CD8-positive, alpha-beta T cell (primary cell): ENCODE measurements at regions of chr10 and their contacts with region 1.

Region 1: DNA sequence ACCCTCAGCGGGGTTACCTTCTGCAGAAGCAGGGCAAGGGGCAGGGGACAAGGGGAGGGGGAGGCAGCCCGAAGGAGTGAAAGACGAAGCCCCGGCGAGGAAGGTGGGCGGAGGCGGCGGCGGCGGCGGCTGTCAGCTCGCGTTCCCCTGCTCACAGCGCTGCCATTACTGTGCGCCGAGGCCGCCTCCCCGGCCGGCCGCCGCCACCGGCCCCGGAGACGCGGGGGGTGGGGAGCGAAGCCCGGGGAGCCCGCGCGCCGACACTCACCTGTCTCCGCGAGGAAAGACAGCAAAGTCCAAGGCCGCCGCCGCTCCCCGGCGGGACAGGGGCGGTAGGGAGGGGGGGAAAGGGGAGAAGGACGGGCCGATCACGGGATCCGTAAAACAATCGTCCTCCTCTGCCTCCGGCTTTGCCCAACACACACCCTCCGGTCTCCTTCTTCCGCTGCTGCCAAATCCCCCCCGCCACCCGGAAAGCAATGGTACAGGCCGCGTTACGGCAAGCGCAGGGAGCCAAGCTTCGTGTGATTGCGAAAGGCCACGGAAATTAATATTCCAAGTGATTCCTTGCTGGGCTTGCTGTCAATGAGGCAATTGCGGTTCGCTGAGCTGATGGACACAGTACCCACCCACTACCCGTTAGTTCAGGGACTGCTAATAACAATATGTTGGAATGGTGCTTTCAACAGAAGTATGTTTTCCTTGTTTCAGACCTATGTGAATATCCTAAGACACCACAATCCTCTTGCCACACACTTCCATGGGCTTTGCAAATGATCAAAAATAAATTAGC is at the start of gene CUL2:
- DNase-seq: peak; percentile 85 to 96 (median 92)
- ATAC-seq: peak; percentile 92
- H3K4me3 ChIP-seq: peak within 1 kb of the TSS; percentile 86 to 97
- H3K4me3 Mint-ChIP-seq: peak within 1 kb of the TSS; percentile 97
- H3K27ac ChIP-seq: peak within 1 kb of the TSS; percentile 94 to 99
- H3K27ac Mint-ChIP-seq: peak within 1 kb of the TSS; percentile 98
- H3K4me1 ChIP-seq: peaks cover 38% of the 10 kb centered on the region
- H3K4me1 Mint-ChIP-seq: peaks cover 50% of the 10 kb centered on the region
- H3K27me3 ChIP-seq: peaks cover 0 to 2% of the 10 kb centered on the region in 2 experiments
- H3K27me3 Mint-ChIP-seq: no peaks in the 10 kb centered on the region
- CTCF ChIP-seq: no peak
- total RNA-seq, gene CUL2: 43.8 to 47.1 TPM

Region 2: GRCh38 chr10:34994565-34995142 is 95.7 kb before region 1 on chr10:
- CTCF ChIA-PET with region 1: no interaction called
- POLR2A ChIA-PET with region 1: no interaction called
- intact Hi-C with region 1: loop called in 1 of 2 experiments (anchors 5 kb)
- DNase-seq: peak in 6 of 9 experiments; percentile 11 to 57 (median 32)
- ATAC-seq: peak; percentile 62
- H3K4me3 ChIP-seq: no peak overlapping the region
- H3K4me3 Mint-ChIP-seq: no peak overlapping the region
- H3K27ac ChIP-seq: no peak overlapping the region
- H3K27ac Mint-ChIP-seq: no peak overlapping the region
- H3K4me1 ChIP-seq: peaks cover 6% of the 10 kb centered on the region
- H3K4me1 Mint-ChIP-seq: peaks cover 7% of the 10 kb centered on the region
- H3K27me3 ChIP-seq: no peaks in the 10 kb centered on the region
- H3K27me3 Mint-ChIP-seq: no peaks in the 10 kb centered on the region
- CTCF ChIP-seq: peak; percentile 36

Region 3: DNA sequence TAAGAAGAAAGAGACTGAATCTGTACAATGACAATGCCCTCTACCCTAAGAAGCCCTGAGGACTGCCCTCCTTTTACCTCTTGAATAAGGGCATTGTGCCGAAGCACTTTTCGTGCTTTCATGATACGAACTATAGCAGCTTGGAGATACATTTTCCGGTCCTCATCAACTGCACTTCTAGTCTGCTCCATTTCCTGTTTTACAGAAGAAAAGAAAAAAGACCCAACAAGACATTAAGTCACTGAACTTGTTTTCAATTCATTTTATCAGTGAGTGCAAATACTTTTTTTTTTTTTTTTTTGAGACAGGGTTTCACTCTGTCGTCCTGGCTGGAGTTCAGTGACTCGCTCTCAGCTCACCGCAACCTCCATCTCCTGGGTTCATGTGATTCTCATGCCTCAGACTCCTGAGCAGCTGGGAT is 78.6 kb before region 1 on chr10:
- CTCF ChIA-PET with region 1: no interaction called
- POLR2A ChIA-PET with region 1: no interaction called
- intact Hi-C with region 1: no loop called
- DNase-seq: no peak
- ATAC-seq: no peak
- H3K4me3 ChIP-seq: no peak overlapping the region
- H3K4me3 Mint-ChIP-seq: no peak overlapping the region
- H3K27ac ChIP-seq: no peak overlapping the region
- H3K27ac Mint-ChIP-seq: no peak overlapping the region
- H3K4me1 ChIP-seq: no peaks in the 10 kb centered on the region
- H3K4me1 Mint-ChIP-seq: no peaks in the 10 kb centered on the region
- H3K27me3 ChIP-seq: no peaks in the 10 kb centered on the region
- H3K27me3 Mint-ChIP-seq: no peaks in the 10 kb centered on the region
- CTCF ChIP-seq: no peak

Region 4: DNA sequence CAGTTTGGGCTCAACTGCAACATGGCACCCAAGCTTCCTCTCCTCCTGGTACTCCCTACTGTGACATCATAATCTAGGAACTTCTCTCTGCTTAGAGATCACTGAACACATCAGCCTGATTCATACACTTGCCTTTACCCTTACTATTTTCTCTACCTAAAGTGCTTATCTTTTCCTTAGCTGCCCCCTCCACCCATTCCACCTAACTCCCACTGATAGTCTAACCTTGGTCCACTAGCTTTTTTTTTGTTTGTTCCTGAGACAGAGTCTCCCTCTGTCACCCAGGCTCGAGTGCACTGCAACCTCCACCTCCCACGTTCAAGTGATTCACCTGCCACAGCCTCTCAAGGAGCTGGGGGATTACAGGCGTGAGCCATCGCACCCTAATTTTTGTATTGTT is 16.1 kb before region 1 on chr10:
- CTCF ChIA-PET with region 1: no interaction called
- POLR2A ChIA-PET with region 1: no interaction called
- intact Hi-C with region 1: no loop called
- DNase-seq: no peak
- ATAC-seq: no peak
- H3K4me3 ChIP-seq: no peak overlapping the region
- H3K4me3 Mint-ChIP-seq: no peak overlapping the region
- H3K27ac ChIP-seq: no peak overlapping the region
- H3K27ac Mint-ChIP-seq: no peak overlapping the region
- H3K4me1 ChIP-seq: no peaks in the 10 kb centered on the region
- H3K4me1 Mint-ChIP-seq: peaks cover 23% of the 10 kb centered on the region
- H3K27me3 ChIP-seq: no peaks in the 10 kb centered on the region
- H3K27me3 Mint-ChIP-seq: no peaks in the 10 kb centered on the region
- CTCF ChIP-seq: no peak

Region 5: DNA sequence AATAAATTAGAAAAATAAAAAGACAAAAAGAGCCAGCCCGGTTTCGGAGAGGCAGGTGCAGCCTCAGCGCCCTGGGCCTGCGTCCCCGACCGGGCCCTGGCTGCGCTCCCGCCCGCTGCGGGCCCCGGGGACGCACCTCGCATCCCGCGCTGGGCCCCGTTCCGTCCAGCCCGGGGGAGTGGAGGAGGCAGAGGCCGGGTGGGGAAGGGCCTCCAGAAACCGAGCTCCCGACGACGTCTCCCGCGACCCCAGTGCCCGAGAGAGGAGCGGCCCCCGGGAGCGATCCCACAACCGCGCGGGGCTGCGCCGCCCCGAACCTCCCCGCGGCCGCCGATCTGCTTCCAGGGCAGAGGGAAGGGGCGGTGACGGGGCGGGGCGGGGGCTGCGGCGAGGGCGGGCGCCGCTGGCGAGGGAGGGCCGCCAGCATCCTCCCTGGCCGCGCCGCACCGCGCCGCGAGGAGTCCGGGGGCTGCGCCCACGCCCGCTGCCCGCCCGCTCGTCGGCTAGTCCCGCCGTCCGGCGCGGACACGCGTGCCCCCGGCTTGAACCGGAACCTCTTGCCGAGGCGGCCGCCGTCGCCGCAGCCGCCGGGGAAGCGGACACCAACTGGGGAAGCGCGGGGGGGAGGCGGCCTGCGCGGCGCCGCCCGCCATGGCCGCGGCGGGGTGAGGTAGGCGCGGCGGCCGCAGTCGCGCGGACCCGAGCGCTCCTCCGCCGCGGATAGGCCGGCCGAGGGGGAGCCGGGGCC is 245.9 kb after region 1 on chr10 and contains the start of gene CCNY:
- CTCF ChIA-PET with region 1: no interaction called
- POLR2A ChIA-PET with region 1: no interaction called
- intact Hi-C with region 1: loop called (anchors 1 kb)
- DNase-seq: peak; percentile 56 to 83 (median 78)
- ATAC-seq: peak; percentile 86
- H3K4me3 ChIP-seq: peak within 1 kb of the TSS; percentile 77 to 78
- H3K4me3 Mint-ChIP-seq: peak within 1 kb of the TSS; percentile 88
- H3K27ac ChIP-seq: peak within 1 kb of the TSS; percentile 60 to 61
- H3K27ac Mint-ChIP-seq: peak within 1 kb of the TSS; percentile 86
- H3K4me1 ChIP-seq: peaks cover 52% of the 10 kb centered on the region
- H3K4me1 Mint-ChIP-seq: peaks cover 71% of the 10 kb centered on the region
- H3K27me3 ChIP-seq: no peaks in the 10 kb centered on the region
- H3K27me3 Mint-ChIP-seq: no peaks in the 10 kb centered on the region
- CTCF ChIP-seq: no peak
- total RNA-seq, gene CCNY: 75.3 to 77.3 TPM